Activated CD4-positive, alpha-beta T cell treated with anti-CD3 and anti-CD28 coated beads, Interleukin-2, amount 10 ng/mL, durations not matched to agents 24 days and 14 days (primary cell): ENCODE measurements at regions of chr6 and their contacts with region 1.

Region 1: GRCh38 chr6:107489636-107490565 is at the start of gene SOBP:
- DNase-seq: peak; percentile 78
- H3K4me3 Mint-ChIP-seq: peak within 1 kb of the TSS; percentile 89
- H3K27ac Mint-ChIP-seq: no peak within 1 kb of the TSS
- H3K4me1 Mint-ChIP-seq: peaks cover 22% of the 10 kb centered on the region
- H3K27me3 Mint-ChIP-seq: peaks cover 45% of the 10 kb centered on the region
- total RNA-seq, gene SOBP: 0.09 and 0.26 TPM in 2 replicates

Region 2: GRCh38 chr6:107459283-107460082 is 30.4 kb before region 1 on chr6 and contains the start of gene PDSS2:
- intact Hi-C with region 1: loop called (anchors 2 kb)
- DNase-seq: peak; percentile 99
- H3K4me3 Mint-ChIP-seq: peak within 1 kb of the TSS; percentile 97
- H3K27ac Mint-ChIP-seq: peak within 1 kb of the TSS; percentile 95
- H3K4me1 Mint-ChIP-seq: peaks cover 21% of the 10 kb centered on the region
- H3K27me3 Mint-ChIP-seq: peaks cover 7% of the 10 kb centered on the region
- total RNA-seq, gene PDSS2: 13.3 and 14.2 TPM in 2 replicates

Region 3: GRCh38 chr6:107634324-107635056 is 144.6 kb after region 1 on chr6:
- intact Hi-C with region 1: loop called (anchors 10 kb)
- DNase-seq: peak; percentile 66
- H3K4me3 Mint-ChIP-seq: peak overlapping the region; percentile 51
- H3K27ac Mint-ChIP-seq: no peak overlapping the region
- H3K4me1 Mint-ChIP-seq: peaks cover 3% of the 10 kb centered on the region
- H3K27me3 Mint-ChIP-seq: peaks cover 74% of the 10 kb centered on the region

Region 4: GRCh38 chr6:108168501-108169463 is 678.9 kb after region 1 on chr6:
- intact Hi-C with region 1: loop called (anchors 5 kb)
- DNase-seq: peak; percentile 60
- H3K4me3 Mint-ChIP-seq: peak overlapping the region; percentile 7
- H3K27ac Mint-ChIP-seq: no peak overlapping the region
- H3K4me1 Mint-ChIP-seq: peaks cover 18% of the 10 kb centered on the region
- H3K27me3 Mint-ChIP-seq: peaks cover 87% of the 10 kb centered on the region